ENCODE measurements at regions of chr1 and their contacts with region 1.

Region 1: DNA sequence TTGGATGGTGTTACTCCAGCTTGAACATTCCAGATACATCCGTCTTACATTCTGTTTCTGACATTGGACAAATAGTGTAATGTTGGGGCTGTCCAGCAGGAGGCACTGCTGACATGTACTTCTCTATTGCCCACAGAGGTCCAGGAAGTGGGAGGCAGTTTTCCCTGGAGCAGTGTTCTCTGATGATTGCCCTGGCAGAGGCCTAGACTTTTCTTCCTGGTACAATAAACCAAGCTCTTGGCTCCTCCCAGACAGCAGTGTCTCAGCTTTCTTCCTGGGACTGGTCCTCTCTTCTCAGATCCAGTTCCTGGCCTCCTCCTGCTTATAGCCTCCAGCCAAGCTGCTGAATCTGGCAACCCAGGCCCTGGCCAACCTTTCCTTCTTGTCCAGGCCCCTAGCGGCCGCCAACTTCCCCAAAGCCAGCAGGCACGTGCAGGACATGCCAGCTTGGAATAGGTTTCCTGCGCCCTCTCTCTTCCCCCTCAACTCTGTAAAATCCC is 14.9 kb upstream of the IFNLR1 start:
- ATAC-seq: peak; percentile 26 to 91 (median 70)
- H3K4me3 ChIP-seq: no peak overlapping the region
- H3K27ac ChIP-seq: no peak overlapping the region
- H3K4me1 ChIP-seq: peaks cover 0 to 2% of the 10 kb centered on the region in 2 donors

Region 2: DNA sequence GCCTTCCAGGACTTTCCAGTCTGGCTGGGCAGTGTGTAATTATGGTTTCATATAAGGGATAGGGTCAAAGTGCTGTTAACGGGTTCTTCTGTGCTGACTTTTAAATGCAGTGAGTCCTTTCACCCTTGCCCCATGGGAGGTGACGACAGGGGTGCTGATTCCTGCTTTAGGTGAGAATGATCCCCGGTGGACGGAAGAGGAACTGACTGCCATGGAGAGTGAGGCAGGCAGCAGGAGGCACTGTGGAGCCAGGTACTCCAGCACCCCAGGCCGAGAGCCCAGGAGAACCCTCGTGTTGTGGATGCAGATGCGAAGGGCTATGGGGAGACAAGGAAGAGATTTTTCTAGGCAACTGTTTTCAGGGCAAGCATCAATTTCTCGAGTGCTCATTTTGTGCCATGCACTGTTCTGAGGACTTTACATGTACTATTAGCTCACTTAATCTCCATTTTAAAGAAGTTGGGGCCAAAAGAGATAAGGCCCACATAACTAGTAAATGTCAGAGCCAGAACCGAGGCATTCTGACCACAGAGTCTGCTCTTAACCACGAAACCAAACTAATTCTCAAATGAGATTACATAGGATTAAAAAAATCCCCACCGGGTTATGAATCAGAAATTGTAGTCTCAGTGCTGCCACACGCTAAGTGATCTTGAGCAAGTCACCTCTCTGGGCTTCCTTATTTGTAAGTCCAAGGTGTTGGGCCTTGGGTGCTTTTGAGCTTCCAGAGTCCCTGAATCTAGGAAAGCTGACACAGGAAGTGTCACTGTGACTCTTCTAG is 183.4 kb after region 1 on chr1:
- in situ Hi-C with region 1: loop called (anchors 5 to 10 kb)
- ATAC-seq: peak in 1 of 8 experiments; percentile 24
- H3K4me3 ChIP-seq: no peak overlapping the region
- H3K27ac ChIP-seq: no peak overlapping the region
- H3K4me1 ChIP-seq: peaks cover 0 to 4% of the 10 kb centered on the region in 2 donors

Region 3: GRCh38 chr1:24586970-24587820 is 385.2 kb after region 1 on chr1:
- in situ Hi-C with region 1: loop called in 1 of 9 experiments (anchors 25 kb)
- ATAC-seq: peak in 5 of 8 experiments; percentile 42 to 91 (median 88)
- H3K4me3 ChIP-seq: no peak overlapping the region
- H3K27ac ChIP-seq: no peak overlapping the region
- H3K4me1 ChIP-seq: no peaks in the 10 kb centered on the region

Region 4: DNA sequence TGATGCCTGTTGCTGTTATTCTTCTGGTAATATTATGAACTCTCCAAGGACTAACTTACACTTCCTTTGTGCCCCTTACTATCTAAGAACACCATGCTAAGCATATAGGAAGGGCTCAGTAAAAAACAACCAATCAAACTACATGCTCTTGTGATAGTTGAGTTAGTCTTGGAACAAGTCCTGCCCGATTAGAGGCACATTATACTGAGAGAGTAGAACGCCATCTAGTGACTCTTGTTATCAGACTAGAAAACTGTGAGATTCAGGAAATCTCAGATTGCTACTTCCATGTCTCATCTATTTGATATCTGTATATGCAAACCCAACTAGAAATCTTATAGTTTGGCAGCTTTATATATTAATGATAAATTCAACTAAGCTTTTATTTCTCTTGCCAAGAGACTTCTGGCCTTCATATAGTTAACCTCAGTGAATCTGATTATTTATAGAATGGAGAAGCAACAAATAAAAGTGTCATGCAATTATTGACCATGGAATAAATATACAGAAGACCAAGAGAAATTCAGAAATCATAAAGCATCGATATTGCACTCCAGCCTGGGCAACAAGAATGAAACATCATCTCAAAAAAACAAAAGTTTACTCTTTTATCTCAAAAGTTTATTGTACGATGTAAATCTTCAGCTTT is 433.3 kb after region 1 on chr1:
- in situ Hi-C with region 1: loop called in 4 of 9 experiments (anchors 10 to 25 kb)
- ATAC-seq: peak; percentile 43 to 85 (median 77)
- H3K4me3 ChIP-seq: no peak overlapping the region
- H3K27ac ChIP-seq: no peak overlapping the region
- H3K4me1 ChIP-seq: no peaks in the 10 kb centered on the region

Region 5: DNA sequence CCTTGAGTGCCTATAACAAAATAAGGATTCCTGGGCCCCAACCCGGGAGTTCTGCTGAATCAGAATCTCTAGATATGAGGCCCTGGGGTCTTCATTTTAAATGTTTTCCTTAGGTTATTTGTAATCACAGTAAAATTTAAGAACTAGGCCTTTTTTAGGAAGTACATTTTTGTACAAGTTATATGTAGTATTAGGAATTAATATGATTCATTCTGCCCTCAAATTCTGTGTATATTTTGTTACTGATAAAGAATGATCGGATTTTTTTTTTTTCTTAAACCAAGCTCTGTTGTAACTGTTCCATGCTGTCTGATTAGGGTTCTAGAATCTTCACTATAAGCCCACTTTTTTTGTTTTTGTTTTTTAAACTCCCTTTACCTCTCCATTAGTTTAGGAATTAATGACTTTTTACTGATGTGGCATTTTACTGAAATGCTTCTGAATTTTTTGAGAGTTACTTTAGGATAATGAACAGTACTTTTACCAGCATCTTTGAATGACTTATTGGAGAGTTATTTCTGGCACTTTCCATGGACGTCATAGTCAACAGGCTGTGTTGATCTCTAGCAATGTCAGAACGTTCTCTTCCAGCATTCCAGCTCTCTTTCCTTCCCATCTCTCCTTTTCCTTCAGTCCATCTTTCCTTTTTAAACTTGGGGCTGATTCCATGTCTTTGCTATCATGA is 591.6 kb after region 1 on chr1:
- in situ Hi-C with region 1: no loop called
- ATAC-seq: peak in 2 of 8 experiments; percentile 28 to 69
- H3K4me3 ChIP-seq: no peak overlapping the region
- H3K27ac ChIP-seq: no peak overlapping the region
- H3K4me1 ChIP-seq: peaks cover 0 to 4% of the 10 kb centered on the region in 2 donors

Region 6: GRCh38 chr1:25148673-25149300 is 946.8 kb after region 1 on chr1:
- in situ Hi-C with region 1: loop called in 1 of 9 experiments (anchors 25 kb)
- ATAC-seq: peak in 1 of 8 experiments; percentile 45
- H3K4me3 ChIP-seq: no peak overlapping the region
- H3K27ac ChIP-seq: no peak overlapping the region
- H3K4me1 ChIP-seq: no peaks in the 10 kb centered on the region

Measured in motor neuron (in vitro differentiated cells).